ENCODE measurements at regions of chr1 and their contacts with region 1.

Region 1: GRCh38 chr1:42035830-42036604 is 117.2 kb upstream of the GUCA2B start:
- DNase-seq: peak; percentile 96 to 99 (median 98)
- ATAC-seq: peak; percentile 94
- H3K4me3 ChIP-seq: peak overlapping the region; percentile 55 to 79
- H3K4me3 Mint-ChIP-seq: peak overlapping the region; percentile 78
- H3K27ac ChIP-seq: peak overlapping the region in 1 of 2 experiments; percentile 51
- H3K27ac Mint-ChIP-seq: peak overlapping the region; percentile 75
- H3K4me1 ChIP-seq: peaks cover 29% of the 10 kb centered on the region
- H3K4me1 Mint-ChIP-seq: peaks cover 42% of the 10 kb centered on the region
- H3K27me3 ChIP-seq: no peaks in the 10 kb centered on the region
- H3K27me3 Mint-ChIP-seq: no peaks in the 10 kb centered on the region
- CTCF ChIP-seq: no peak

Region 2: GRCh38 chr1:40802078-40802741 is 1233.8 kb before region 1 on chr1:
- CTCF ChIA-PET with region 1: no interaction called
- POLR2A ChIA-PET with region 1: no interaction called
- intact Hi-C with region 1: loop called in 1 of 2 experiments (anchors 5 kb)
- DNase-seq: peak; percentile 69 to 93 (median 84)
- ATAC-seq: peak; percentile 95
- H3K4me3 ChIP-seq: peak overlapping the region; percentile 51 to 87
- H3K4me3 Mint-ChIP-seq: peak overlapping the region; percentile 74
- H3K27ac ChIP-seq: peak overlapping the region; percentile 49 to 55
- H3K27ac Mint-ChIP-seq: peak overlapping the region; percentile 75
- H3K4me1 ChIP-seq: peaks cover 29% of the 10 kb centered on the region
- H3K4me1 Mint-ChIP-seq: peaks cover 30% of the 10 kb centered on the region
- H3K27me3 ChIP-seq: no peaks in the 10 kb centered on the region
- H3K27me3 Mint-ChIP-seq: no peaks in the 10 kb centered on the region
- CTCF ChIP-seq: no peak

Region 3: GRCh38 chr1:41662061-41662764 is 373.8 kb before region 1 on chr1:
- CTCF ChIA-PET with region 1: no interaction called
- POLR2A ChIA-PET with region 1: no interaction called
- intact Hi-C with region 1: loop called in 1 of 2 experiments (anchors 5 kb)
- DNase-seq: peak; percentile 34 to 90 (median 72)
- ATAC-seq: peak; percentile 86
- H3K4me3 ChIP-seq: peak overlapping the region; percentile 61 to 76
- H3K4me3 Mint-ChIP-seq: peak overlapping the region; percentile 26
- H3K27ac ChIP-seq: peak overlapping the region; percentile 28 to 68
- H3K27ac Mint-ChIP-seq: no peak overlapping the region
- H3K4me1 ChIP-seq: peaks cover 35% of the 10 kb centered on the region
- H3K4me1 Mint-ChIP-seq: peaks cover 77% of the 10 kb centered on the region
- H3K27me3 ChIP-seq: no peaks in the 10 kb centered on the region
- H3K27me3 Mint-ChIP-seq: no peaks in the 10 kb centered on the region
- CTCF ChIP-seq: no peak

Region 4: GRCh38 chr1:41891199-41891896 is 144.7 kb before region 1 on chr1:
- CTCF ChIA-PET with region 1: interaction called, 20 read pairs
- POLR2A ChIA-PET with region 1: interaction called, 8 read pairs
- intact Hi-C with region 1: loop called (anchors 2 kb)
- DNase-seq: peak; percentile 22 to 89 (median 64)
- ATAC-seq: peak; percentile 98
- H3K4me3 ChIP-seq: peak overlapping the region; percentile 53 to 56
- H3K4me3 Mint-ChIP-seq: peak overlapping the region; percentile 81
- H3K27ac ChIP-seq: peak overlapping the region; percentile 58 to 74
- H3K27ac Mint-ChIP-seq: peak overlapping the region; percentile 93
- H3K4me1 ChIP-seq: peaks cover 28% of the 10 kb centered on the region
- H3K4me1 Mint-ChIP-seq: peaks cover 46% of the 10 kb centered on the region
- H3K27me3 ChIP-seq: no peaks in the 10 kb centered on the region
- H3K27me3 Mint-ChIP-seq: no peaks in the 10 kb centered on the region
- CTCF ChIP-seq: peak; percentile 60

Region 5: GRCh38 chr1:41950820-41951219 is 85.2 kb before region 1 on chr1:
- CTCF ChIA-PET with region 1: no interaction called
- POLR2A ChIA-PET with region 1: no interaction called
- intact Hi-C with region 1: no loop called
- DNase-seq: no peak
- ATAC-seq: no peak
- H3K4me3 ChIP-seq: no peak overlapping the region
- H3K4me3 Mint-ChIP-seq: no peak overlapping the region
- H3K27ac ChIP-seq: no peak overlapping the region
- H3K27ac Mint-ChIP-seq: no peak overlapping the region
- H3K4me1 ChIP-seq: no peaks in the 10 kb centered on the region
- H3K4me1 Mint-ChIP-seq: peaks cover 6% of the 10 kb centered on the region
- H3K27me3 ChIP-seq: no peaks in the 10 kb centered on the region
- H3K27me3 Mint-ChIP-seq: no peaks in the 10 kb centered on the region
- CTCF ChIP-seq: no peak

Region 6: DNA sequence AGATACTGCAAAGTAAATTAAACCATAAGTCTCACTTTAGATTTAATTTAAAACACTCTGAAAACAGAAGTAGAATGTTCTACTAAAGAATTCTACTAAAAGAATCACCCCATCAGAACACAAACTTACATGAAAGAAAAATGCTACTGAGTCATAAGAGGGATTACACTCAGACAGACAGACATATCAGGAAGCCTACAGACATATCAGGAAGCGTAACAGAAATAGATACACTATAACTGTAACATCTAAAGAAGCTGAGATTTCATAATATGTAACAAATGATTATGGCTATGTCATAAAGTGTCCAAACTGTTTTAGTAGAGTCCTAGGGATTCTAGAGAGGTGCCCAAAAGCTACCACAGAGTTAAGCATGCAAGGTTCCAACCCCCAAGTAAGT is 275.1 kb after region 1 on chr1:
- CTCF ChIA-PET with region 1: no interaction called
- POLR2A ChIA-PET with region 1: no interaction called
- intact Hi-C with region 1: no loop called
- DNase-seq: no peak
- ATAC-seq: no peak
- H3K4me3 ChIP-seq: no peak overlapping the region
- H3K4me3 Mint-ChIP-seq: no peak overlapping the region
- H3K27ac ChIP-seq: no peak overlapping the region
- H3K27ac Mint-ChIP-seq: no peak overlapping the region
- H3K4me1 ChIP-seq: peaks cover 35% of the 10 kb centered on the region
- H3K4me1 Mint-ChIP-seq: peaks cover 76% of the 10 kb centered on the region
- H3K27me3 ChIP-seq: no peaks in the 10 kb centered on the region
- H3K27me3 Mint-ChIP-seq: no peaks in the 10 kb centered on the region
- CTCF ChIP-seq: no peak

Region 7: GRCh38 chr1:42456010-42456758 is 420.2 kb after region 1 on chr1 and contains the starts of genes PPCS and ZMYND12:
- CTCF ChIA-PET with region 1: no interaction called
- POLR2A ChIA-PET with region 1: no interaction called
- intact Hi-C with region 1: loop called in 1 of 2 experiments (anchors 5 kb)
- DNase-seq: peak; percentile 82 to 98 (median 91)
- ATAC-seq: peak; percentile 92
- H3K4me3 ChIP-seq: peak within 1 kb of the TSS; percentile 99
- H3K4me3 Mint-ChIP-seq: peak within 1 kb of the TSS; percentile 98
- H3K27ac ChIP-seq: peak within 1 kb of the TSS; percentile 99 to 100
- H3K27ac Mint-ChIP-seq: peak within 1 kb of the TSS; percentile 100
- H3K4me1 ChIP-seq: peaks cover 25% of the 10 kb centered on the region
- H3K4me1 Mint-ChIP-seq: peaks cover 37% of the 10 kb centered on the region
- H3K27me3 ChIP-seq: no peaks in the 10 kb centered on the region
- H3K27me3 Mint-ChIP-seq: no peaks in the 10 kb centered on the region
- CTCF ChIP-seq: peak; percentile 34
- total RNA-seq, gene PPCS: 38.0 to 38.1 TPM
- total RNA-seq, gene ZMYND12: 0.56 to 0.76 TPM

Region 8: DNA sequence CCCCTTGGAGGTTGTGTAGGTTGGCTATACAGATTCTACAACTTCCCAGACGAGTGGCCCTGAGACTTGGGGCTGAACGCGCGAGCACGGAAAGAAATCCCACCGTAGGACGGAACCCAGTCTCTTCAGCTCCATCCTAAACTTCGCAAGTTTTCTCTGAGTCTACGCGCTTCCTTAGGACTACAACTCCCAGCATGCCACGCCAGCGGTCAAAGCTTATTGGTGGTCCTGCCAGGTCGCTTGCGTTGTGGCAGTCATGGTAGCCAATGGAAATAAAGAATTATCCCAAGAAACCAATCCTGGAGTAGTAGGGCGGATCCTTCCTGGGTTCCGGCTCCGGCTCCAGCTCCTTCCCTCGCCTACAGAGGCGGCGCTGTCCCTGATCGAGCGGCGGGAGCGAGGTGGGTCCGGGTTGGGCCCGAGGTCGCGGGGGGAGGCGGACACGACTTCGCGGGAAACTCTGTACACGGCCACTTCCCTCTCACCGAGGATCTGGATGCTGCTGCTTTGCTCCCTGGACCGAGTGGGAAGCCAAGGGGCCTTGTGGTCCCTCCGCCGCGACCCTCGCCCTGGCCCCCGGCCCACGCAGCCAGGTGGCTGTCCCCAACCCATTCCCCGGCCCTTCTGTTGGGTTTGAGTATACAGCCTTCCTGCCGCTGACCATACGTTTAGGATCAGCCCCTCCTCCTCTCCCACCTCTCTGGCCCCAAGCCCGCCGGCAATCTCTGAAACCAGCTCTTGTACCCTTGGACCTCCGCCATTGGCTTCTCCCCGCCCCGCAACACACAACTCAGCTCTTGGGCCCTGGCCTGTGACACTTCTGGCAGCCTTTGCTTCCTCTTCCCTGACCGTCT is 810.5 kb after region 1 on chr1 and contains the start of gene ZNF691:
- CTCF ChIA-PET with region 1: no interaction called
- POLR2A ChIA-PET with region 1: no interaction called
- intact Hi-C with region 1: loop called in 1 of 2 experiments (anchors 10 kb)
- DNase-seq: peak; percentile 71 to 96 (median 87)
- ATAC-seq: peak; percentile 97
- H3K4me3 ChIP-seq: peak within 1 kb of the TSS; percentile 74 to 96
- H3K4me3 Mint-ChIP-seq: peak within 1 kb of the TSS; percentile 92
- H3K27ac ChIP-seq: peak within 1 kb of the TSS; percentile 46 to 72
- H3K27ac Mint-ChIP-seq: peak within 1 kb of the TSS; percentile 88
- H3K4me1 ChIP-seq: peaks cover 23% of the 10 kb centered on the region
- H3K4me1 Mint-ChIP-seq: peaks cover 38% of the 10 kb centered on the region
- H3K27me3 ChIP-seq: no peaks in the 10 kb centered on the region
- H3K27me3 Mint-ChIP-seq: no peaks in the 10 kb centered on the region
- CTCF ChIP-seq: no peak
- total RNA-seq, gene ZNF691: 1.1 to 1.3 TPM

Measured in CD8-positive, alpha-beta T cell (primary cell).